ENCODE measurements at regions of chr15 and their contacts with region 1.

Region 1: DNA sequence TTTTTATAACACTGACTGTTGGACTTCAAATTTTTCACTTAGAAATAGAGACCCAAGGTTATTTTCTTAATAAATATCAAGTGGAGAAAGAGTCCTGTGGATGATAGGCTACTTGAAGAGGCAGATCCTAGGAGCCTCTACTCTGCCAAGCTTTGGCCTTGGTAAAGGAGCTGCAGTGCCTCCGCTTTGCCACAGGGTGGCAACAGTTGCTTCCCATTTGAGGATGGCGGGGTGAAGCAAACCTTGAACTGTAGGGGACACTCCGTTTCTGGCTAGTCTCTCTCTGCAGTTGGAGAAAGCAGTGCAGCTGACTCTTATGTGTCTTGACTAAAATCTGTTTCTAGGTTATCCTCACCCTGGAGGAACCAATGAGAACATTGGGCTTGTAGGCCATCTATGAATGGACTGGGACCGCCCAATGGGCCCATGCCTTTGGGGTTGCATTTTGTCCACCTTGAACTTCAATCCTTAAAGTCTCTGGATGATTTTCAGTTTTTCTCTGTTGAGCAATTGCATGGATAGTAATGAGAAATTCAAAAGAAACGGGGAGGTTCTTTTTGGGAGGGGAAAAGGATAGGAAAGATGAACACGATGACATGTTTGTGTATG is 9.8 kb downstream of the SCG5 start:
- DNase-seq: peak in 1 of 2 donors; percentile 9
- ATAC-seq: peak in 1 of 2 donors; percentile 78
- H3K4me3 ChIP-seq: no peak overlapping the region
- H3K27ac ChIP-seq: no peak overlapping the region
- H3K4me1 ChIP-seq: no peaks in the 10 kb centered on the region
- H3K27me3 ChIP-seq: no peaks in the 10 kb centered on the region
- CTCF ChIP-seq: peak; percentile 30 to 81 (median 61)
- POLR2A ChIP-seq: no peak

Region 2: GRCh38 chr15:32743411-32744140 is 92.2 kb after region 1 on chr15:
- in situ Hi-C with region 1: no loop called
- intact Hi-C with region 1: no loop called
- DNase-seq: no peak
- ATAC-seq: no peak
- H3K4me3 ChIP-seq: no peak overlapping the region
- H3K27ac ChIP-seq: no peak overlapping the region
- H3K4me1 ChIP-seq: no peaks in the 10 kb centered on the region
- H3K27me3 ChIP-seq: no peaks in the 10 kb centered on the region
- CTCF ChIP-seq: no peak
- POLR2A ChIP-seq: no peak

Region 3: GRCh38 chr15:32994810-32995424 is 343.6 kb after region 1 on chr15:
- in situ Hi-C with region 1: loop called in 3 of 4 experiments (anchors 25 kb)
- intact Hi-C with region 1: no loop called
- DNase-seq: no peak
- ATAC-seq: no peak
- H3K4me3 ChIP-seq: no peak overlapping the region
- H3K27ac ChIP-seq: no peak overlapping the region
- H3K4me1 ChIP-seq: no peaks in the 10 kb centered on the region
- H3K27me3 ChIP-seq: no peaks in the 10 kb centered on the region
- CTCF ChIP-seq: peak in 3 of 5 experiments; percentile 10 to 34 (median 30)
- POLR2A ChIP-seq: no peak

Region 4: DNA sequence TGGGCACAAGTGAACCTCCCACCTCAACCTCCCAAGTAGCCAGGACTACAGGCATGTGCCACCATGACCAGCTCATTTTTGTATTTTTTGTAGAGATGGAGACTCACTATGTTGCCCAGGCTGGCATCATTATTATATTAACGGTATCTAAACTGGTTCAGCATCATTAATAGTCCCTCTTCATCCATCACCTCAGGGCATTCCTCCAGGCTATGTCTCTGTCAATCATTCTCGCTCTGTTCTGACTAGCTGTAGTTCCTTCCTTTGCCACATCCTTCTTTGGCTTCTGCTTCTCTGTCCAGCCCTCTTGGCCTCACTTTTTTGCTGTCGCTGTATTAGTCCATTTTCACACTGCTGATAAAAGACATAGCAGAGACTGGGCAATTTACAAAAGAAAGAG is 600.0 kb after region 1 on chr15:
- in situ Hi-C with region 1: no loop called
- intact Hi-C with region 1: no loop called
- DNase-seq: no peak
- ATAC-seq: no peak
- H3K4me3 ChIP-seq: no peak overlapping the region
- H3K27ac ChIP-seq: no peak overlapping the region
- H3K4me1 ChIP-seq: no peaks in the 10 kb centered on the region
- H3K27me3 ChIP-seq: peaks cover 0 to 2% (median 0%) of the 10 kb centered on the region in 3 donors
- CTCF ChIP-seq: no peak
- POLR2A ChIP-seq: no peak